A549 (cell line): ENCODE measurements at regions of chr5 and their contacts with region 1.

Region 1: GRCh38 chr5:140054086-140054689 is 11.1 kb upstream of the NRG2 start:
- DNase-seq: no peak
- ATAC-seq: no peak
- H3K4me3 ChIP-seq: no peak overlapping the region
- H3K27ac ChIP-seq: no peak overlapping the region
- H3K4me1 ChIP-seq: no peaks in the 10 kb centered on the region
- CTCF ChIP-seq: no peak
- EP300 ChIP-seq: no peak
- POLR2A ChIP-seq: no peak
- RAD21 ChIP-seq: no peak

Region 2: DNA sequence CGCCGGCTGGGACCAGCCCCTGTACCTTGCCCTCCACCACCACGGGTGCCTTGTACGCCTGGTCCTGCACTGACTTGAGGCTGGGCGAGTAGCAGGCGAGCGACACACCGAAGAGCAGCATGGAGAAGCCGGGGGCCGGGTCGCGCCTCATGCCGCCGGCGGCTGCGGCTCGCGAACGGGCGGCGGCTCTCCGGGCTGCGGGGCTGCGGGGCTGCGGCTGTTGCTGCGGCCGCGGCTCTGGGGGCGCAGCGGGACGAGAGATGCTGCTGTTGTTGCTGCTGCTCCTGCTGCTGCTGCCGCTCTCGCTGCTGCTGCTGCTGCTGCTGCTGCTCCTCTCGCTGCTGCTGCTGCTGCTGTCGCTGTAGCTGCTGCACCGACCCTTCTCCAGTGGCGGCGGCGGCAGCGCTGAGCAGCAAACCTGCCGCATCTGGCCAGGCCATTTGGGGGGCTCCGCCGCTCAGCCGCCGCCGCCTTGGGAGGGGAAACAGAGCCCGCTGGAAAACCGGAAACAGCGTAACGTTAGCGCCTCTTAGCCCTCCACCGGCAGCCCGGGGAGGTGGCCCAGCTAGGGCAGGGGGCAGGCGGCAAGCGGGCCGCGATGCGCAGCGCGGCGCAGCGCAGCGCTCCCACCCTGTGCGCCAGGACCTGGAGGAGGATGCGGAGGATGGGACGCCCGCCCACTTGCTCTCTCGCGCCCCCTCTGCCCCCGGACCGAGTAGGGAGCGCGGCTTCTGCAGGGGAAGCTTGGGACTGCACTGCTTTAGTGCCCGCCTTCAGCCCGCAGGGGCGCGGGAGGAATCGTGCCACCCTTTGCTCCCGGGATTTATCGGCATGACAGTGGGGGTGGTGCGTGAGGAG is 11.3 kb before region 1 on chr5 and contains the start of gene NRG2:
- CTCF ChIA-PET with region 1: interaction called, 10 read pairs
- POLR2A ChIA-PET with region 1: no interaction called
- DNase-seq: peak; percentile 83 to 89
- ATAC-seq: peak; percentile 86 to 95
- H3K4me3 ChIP-seq: peak within 1 kb of the TSS; percentile 54
- H3K27ac ChIP-seq: peak within 1 kb of the TSS; percentile 47 to 78
- H3K4me1 ChIP-seq: peaks cover 17% of the 10 kb centered on the region; the same call in 2 of the 3 replicates
- CTCF ChIP-seq: peak; percentile 58
- EP300 ChIP-seq: no peak
- POLR2A ChIP-seq: peak; percentile 48
- RAD21 ChIP-seq: no peak; a peak in 1 of 5 replicates
- polyA plus RNA-seq, gene NRG2: 0.65 and 1.1 TPM in 2 replicates

Region 3: DNA sequence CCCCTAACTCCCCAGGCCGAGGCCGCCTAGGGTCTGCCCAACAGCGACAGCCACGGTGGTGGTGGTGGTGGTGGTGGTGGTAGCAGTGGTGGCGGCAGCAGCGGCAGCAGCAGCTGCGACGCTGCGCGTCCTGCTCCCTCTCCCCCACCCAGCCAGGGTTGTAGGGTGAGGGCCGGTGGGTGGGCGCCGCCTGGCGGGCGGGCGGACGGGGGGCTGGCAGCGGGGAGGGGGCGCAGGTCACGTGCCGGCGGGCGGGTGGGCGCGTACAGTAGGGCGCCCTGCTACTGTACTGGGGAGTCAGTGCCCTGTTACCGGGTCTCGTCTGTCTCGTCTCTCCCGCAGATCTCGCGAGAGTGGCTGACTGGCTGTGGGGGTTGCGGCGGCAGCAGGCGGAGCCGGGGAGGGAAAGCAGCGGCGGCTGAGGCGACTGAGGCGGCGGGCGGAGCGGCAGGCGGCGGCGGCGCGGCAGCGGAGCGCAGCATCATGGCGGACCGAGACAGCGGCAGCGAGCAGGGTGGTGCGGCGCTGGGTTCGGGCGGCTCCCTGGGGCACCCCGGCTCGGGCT is 59.6 kb after region 1 on chr5 and contains the start of gene PURA:
- CTCF ChIA-PET with region 1: no interaction called
- POLR2A ChIA-PET with region 1: no interaction called
- DNase-seq: peak; percentile 92 to 94
- ATAC-seq: peak; percentile 91 to 93
- H3K4me3 ChIP-seq: peak within 1 kb of the TSS; percentile 68
- H3K27ac ChIP-seq: peak within 1 kb of the TSS; percentile 92 to 96
- H3K4me1 ChIP-seq: peaks cover 48% of the 10 kb centered on the region
- CTCF ChIP-seq: peak; percentile 24; the same call in 2 of the 3 replicates
- EP300 ChIP-seq: no peak
- POLR2A ChIP-seq: peak; percentile 85
- RAD21 ChIP-seq: 0 out of 5 replicates have a peak, but pooled peaks of 1 of the 2 experiments have one; percentile 19
- polyA plus RNA-seq, gene PURA: 3.4 and 4.5 TPM in 2 replicates